Right lobe of liver (tissue), 6 donors: ENCODE measurements at regions of chr9 and their contacts with region 1.

Region 1: DNA sequence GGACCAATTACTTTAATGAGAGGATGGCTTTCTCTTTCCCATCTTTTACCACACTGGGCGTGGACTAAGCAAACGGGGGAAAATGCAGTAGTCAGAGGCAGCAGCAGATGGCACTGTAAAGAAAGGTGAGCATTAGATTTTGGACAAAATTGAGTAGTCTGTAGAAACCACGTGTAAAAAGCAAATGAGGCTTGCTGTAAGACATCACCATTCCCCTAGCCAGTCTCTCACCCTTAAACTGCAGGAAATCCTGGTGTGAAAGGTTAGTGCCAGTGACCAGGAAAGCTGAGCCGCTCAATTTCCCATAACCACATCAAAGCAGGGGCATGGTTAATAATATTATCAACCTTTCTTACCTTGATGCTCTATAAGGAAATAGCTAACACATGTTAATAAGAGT is 31.8 kb downstream of the SPATA31C2 start:
- DNase-seq: no peak
- ATAC-seq: peak; percentile 82 to 99 (median 92)
- H3K4me3 ChIP-seq: no peak overlapping the region
- H3K27ac ChIP-seq: no peak overlapping the region
- H3K4me1 ChIP-seq: no peaks in the 10 kb centered on the region
- H3K27me3 ChIP-seq: no peaks in the 10 kb centered on the region
- CTCF ChIP-seq: peak; percentile 58 to 82 (median 64)
- POLR2A ChIP-seq: no peak

Region 2: GRCh38 chr9:87179573-87180340 is 926.7 kb before region 1 on chr9:
- intact Hi-C with region 1: no loop called
- DNase-seq: no peak
- ATAC-seq: no peak
- H3K4me3 ChIP-seq: no peak overlapping the region
- H3K27ac ChIP-seq: no peak overlapping the region
- H3K4me1 ChIP-seq: no peaks in the 10 kb centered on the region
- H3K27me3 ChIP-seq: no peaks in the 10 kb centered on the region
- CTCF ChIP-seq: no peak
- POLR2A ChIP-seq: no peak

Region 3: DNA sequence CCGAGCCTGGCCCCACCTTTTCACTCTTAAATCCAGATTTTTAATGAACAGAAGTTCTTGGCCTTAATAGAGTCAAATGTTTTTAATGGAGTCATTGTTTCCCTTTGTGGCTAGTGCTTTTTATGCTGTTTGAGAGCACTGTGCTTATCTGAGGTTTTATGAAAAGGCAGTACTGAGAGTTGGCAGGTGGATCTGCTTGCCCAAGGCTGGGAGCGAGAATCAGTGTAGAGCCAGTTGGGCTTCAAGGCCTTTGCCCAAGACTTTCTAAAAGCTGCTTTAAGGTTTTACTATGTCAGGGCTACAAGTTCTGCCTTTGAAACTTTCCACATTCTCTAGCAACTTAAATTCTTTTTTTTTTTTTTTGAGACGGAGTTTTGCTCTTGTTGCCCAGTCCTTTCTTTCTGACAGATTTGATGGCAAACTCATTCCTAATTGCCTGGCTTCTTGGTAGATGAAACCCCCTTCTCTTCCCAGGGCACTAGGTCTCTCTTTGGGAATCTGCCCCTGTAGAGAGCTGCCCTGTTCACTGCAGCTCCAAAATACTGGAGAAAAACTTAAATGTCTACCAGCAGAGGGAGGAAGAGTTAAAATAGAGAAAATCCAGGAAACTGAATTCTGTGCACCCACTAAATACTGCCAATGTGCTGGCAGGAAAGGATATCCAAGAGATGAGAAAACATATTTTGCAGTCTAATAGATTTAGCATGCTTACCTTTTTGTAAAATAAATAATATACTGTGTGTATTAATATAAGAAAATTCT is 95.3 kb before region 1 on chr9:
- intact Hi-C with region 1: no loop called
- DNase-seq: no peak
- ATAC-seq: peak in 1 of 4 donors; percentile 34
- H3K4me3 ChIP-seq: no peak overlapping the region
- H3K27ac ChIP-seq: no peak overlapping the region
- H3K4me1 ChIP-seq: no peaks in the 10 kb centered on the region
- H3K27me3 ChIP-seq: no peaks in the 10 kb centered on the region
- CTCF ChIP-seq: peak in 2 of 4 donors; percentile 14 to 18
- POLR2A ChIP-seq: no peak

Region 4: GRCh38 chr9:88578121-88579054 is 471.9 kb after region 1 on chr9:
- intact Hi-C with region 1: loop called in 1 of 2 experiments (anchors 5 kb)
- DNase-seq: peak; percentile 87 to 89 (median 87)
- ATAC-seq: peak; percentile 98 to 100 (median 100)
- H3K4me3 ChIP-seq: no peak overlapping the region
- H3K27ac ChIP-seq: no peak overlapping the region
- H3K4me1 ChIP-seq: no peaks in the 10 kb centered on the region
- H3K27me3 ChIP-seq: no peaks in the 10 kb centered on the region
- CTCF ChIP-seq: peak; percentile 95 to 98 (median 96)
- POLR2A ChIP-seq: no peak